Activated CD4-positive, alpha-beta T cell treated with anti-CD3 and anti-CD28 coated beads for 36 hours (primary cell): ENCODE measurements at regions of chr12 and their contacts with region 1.

Region 1: GRCh38 chr12:52023182-52023975 is 16.6 kb downstream of the TAMALIN start:
- DNase-seq: peak; percentile 97
- ATAC-seq: peak; percentile 69
- H3K4me3 Mint-ChIP-seq: peak overlapping the region; percentile 77
- H3K27ac Mint-ChIP-seq: peak overlapping the region; percentile 97
- H3K4me1 Mint-ChIP-seq: peaks cover 37% of the 10 kb centered on the region
- H3K27me3 Mint-ChIP-seq: no peaks in the 10 kb centered on the region

Region 2: DNA sequence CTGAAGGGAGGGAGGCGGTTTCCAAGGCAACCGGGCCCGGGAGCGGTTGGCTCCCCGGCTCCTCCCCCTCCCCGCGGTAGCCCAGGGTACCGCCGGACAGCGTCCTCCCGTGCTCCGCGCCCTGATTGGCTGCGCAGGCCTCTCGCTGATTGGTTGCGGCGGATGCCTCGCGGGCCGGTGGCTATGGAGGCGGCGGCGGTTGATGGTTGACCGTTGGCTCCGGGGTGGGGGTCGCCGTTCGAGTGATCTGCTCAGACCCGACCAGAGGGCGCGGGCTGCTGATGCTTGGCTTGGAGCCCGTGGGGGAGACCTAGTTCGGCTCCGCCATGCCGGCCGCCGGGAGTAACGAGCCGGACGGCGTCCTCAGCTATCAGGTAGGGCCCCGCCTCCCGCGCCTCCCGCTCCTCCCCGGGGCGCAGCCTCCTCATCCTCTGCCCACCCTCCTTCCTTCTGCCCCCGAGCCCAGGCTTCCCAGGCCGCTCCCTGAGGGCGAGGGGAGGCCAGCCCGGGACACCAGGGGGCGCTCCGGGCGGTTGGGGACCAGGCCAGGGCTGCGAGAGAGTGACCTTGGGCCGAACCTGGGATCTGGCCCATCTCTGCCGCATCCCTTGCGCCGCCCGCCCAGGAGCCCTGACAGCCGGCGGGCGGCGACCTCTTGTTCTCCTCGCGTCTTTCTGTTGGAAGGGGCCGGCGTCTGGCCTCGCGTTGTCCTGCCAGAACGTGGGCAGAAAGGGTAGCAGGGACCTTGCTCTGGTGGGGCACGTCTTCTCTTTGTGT is 598.5 kb before region 1 on chr12 and contains the start of gene SLC4A8:
- CTCF ChIA-PET with region 1: no interaction called
- POLR2A ChIA-PET with region 1: no interaction called
- intact Hi-C with region 1: loop called in 1 of 2 experiments (anchors 10 kb)
- DNase-seq: peak; percentile 89
- ATAC-seq: peak; percentile 96
- H3K4me3 Mint-ChIP-seq: peak within 1 kb of the TSS; percentile 71
- H3K27ac Mint-ChIP-seq: no peak within 1 kb of the TSS
- H3K4me1 Mint-ChIP-seq: peaks cover 11% of the 10 kb centered on the region
- H3K27me3 Mint-ChIP-seq: no peaks in the 10 kb centered on the region
- total RNA-seq, gene SLC4A8: 1.7 to 2.0 TPM

Region 3: GRCh38 chr12:51951199-51951842 is 72.1 kb before region 1 on chr12 and contains the start of gene ACVR1B:
- CTCF ChIA-PET with region 1: interaction called, 8 read pairs
- POLR2A ChIA-PET with region 1: no interaction called
- intact Hi-C with region 1: loop called in 1 of 2 experiments (anchors 1 kb)
- DNase-seq: peak; percentile 94
- ATAC-seq: peak; percentile 98
- H3K4me3 Mint-ChIP-seq: peak within 1 kb of the TSS; percentile 90
- H3K27ac Mint-ChIP-seq: peak within 1 kb of the TSS; percentile 76
- H3K4me1 Mint-ChIP-seq: peaks cover 40% of the 10 kb centered on the region
- H3K27me3 Mint-ChIP-seq: peaks cover 10% of the 10 kb centered on the region
- total RNA-seq, gene ACVR1B: 10.1 to 12.7 TPM

Region 4: GRCh38 chr12:51994959-51995358 is 28.4 kb before region 1 on chr12:
- CTCF ChIA-PET with region 1: interaction called, 220 read pairs
- POLR2A ChIA-PET with region 1: no interaction called
- intact Hi-C with region 1: loop called (anchors 1 kb)
- DNase-seq: no peak
- ATAC-seq: no peak
- H3K4me3 Mint-ChIP-seq: no peak overlapping the region
- H3K27ac Mint-ChIP-seq: no peak overlapping the region
- H3K4me1 Mint-ChIP-seq: peaks cover 2% of the 10 kb centered on the region
- H3K27me3 Mint-ChIP-seq: no peaks in the 10 kb centered on the region

Region 5: GRCh38 chr12:52050761-52051541 is 27.6 kb after region 1 on chr12 and contains the start of gene NR4A1:
- CTCF ChIA-PET with region 1: interaction called, 66 read pairs
- POLR2A ChIA-PET with region 1: interaction called, 3 read pairs
- intact Hi-C with region 1: loop called (anchors 1 kb)
- DNase-seq: peak; percentile 100
- ATAC-seq: peak; percentile 88
- H3K4me3 Mint-ChIP-seq: peak within 1 kb of the TSS; percentile 92
- H3K27ac Mint-ChIP-seq: peak within 1 kb of the TSS; percentile 91
- H3K4me1 Mint-ChIP-seq: peaks cover 38% of the 10 kb centered on the region
- H3K27me3 Mint-ChIP-seq: no peaks in the 10 kb centered on the region
- total RNA-seq, gene NR4A1: 69.4 to 72.8 TPM

Region 6: GRCh38 chr12:52082988-52083637 is 59.7 kb after region 1 on chr12:
- CTCF ChIA-PET with region 1: interaction called, 69 read pairs
- POLR2A ChIA-PET with region 1: interaction called, 5 read pairs
- intact Hi-C with region 1: loop called (anchors 1 kb)
- DNase-seq: peak; percentile 81
- ATAC-seq: peak; percentile 83
- H3K4me3 Mint-ChIP-seq: no peak overlapping the region
- H3K27ac Mint-ChIP-seq: no peak overlapping the region
- H3K4me1 Mint-ChIP-seq: peaks cover 8% of the 10 kb centered on the region
- H3K27me3 Mint-ChIP-seq: peaks cover 7% of the 10 kb centered on the region